MCF 10A (cell line): ENCODE measurements at regions of chr14 and their contacts with region 1.

Region 1: GRCh38 chr14:59126710-59127432 is 61.6 kb upstream of the DAAM1 start:
- DNase-seq: peak; percentile 75
- H3K4me3 Mint-ChIP-seq: no peak overlapping the region
- H3K27ac Mint-ChIP-seq: no peak overlapping the region
- H3K4me1 Mint-ChIP-seq: no peaks in the 10 kb centered on the region
- H3K27me3 Mint-ChIP-seq: peaks cover 12% of the 10 kb centered on the region
- CTCF ChIP-seq: peak; percentile 61

Region 2: DNA sequence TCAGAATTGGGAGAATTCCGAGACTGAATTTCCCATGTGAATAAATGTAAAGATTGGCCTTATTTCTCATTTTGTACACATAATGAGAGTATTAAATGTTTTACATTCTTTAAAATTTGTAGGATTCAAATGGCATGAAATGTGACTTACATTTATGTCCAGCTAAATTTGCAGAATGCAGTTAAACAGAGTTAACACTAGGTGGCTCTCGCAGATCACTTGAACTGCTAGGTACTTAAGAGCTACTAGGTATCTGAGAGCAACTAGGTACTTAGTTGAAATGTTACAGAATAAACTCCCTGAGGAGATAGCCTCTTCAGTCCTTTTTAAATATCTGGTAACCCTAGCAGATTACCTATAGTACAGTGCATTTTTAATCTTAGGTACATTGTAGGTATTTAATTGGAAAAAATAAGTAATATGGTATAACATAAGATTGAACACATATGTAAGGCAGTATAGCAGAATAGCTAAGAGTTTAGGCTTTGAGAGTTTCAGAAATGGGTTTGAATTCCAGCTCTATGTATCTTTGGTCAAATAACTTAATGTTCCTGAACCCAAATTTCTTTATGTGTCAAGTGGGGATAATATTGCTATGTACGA is 625.6 kb before region 1 on chr14:
- CTCF ChIA-PET with region 1: interaction called, 42 read pairs
- POLR2A ChIA-PET with region 1: interaction called, 3 read pairs
- intact Hi-C with region 1: loop called (anchors 1 kb)
- DNase-seq: peak; percentile 50
- H3K4me3 Mint-ChIP-seq: no peak overlapping the region
- H3K27ac Mint-ChIP-seq: no peak overlapping the region
- H3K4me1 Mint-ChIP-seq: no peaks in the 10 kb centered on the region
- H3K27me3 Mint-ChIP-seq: no peaks in the 10 kb centered on the region
- CTCF ChIP-seq: peak; percentile 58

Region 3: DNA sequence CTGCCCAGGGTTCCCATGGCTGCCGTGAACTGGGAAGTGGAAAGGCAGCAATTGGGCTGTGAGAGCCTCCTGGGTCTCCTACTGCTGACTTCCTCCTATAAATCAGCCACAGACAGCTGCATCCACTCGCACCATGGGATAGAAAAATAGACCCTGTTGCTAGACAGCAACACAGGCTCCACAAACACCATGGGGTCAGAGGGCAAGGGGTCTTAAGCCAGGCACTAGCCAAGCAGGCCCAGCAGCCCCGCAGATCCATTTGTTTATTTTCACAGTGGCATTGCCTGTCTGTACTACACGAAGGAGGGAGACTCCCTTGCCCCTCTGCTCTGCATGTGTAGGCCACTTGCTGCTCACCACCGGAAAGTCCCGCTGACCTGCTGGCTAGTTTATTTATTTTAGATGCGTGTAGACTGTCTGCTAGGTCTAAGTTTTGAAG is 349.3 kb before region 1 on chr14:
- CTCF ChIA-PET with region 1: no interaction called
- POLR2A ChIA-PET with region 1: no interaction called
- intact Hi-C with region 1: no loop called
- DNase-seq: no peak
- H3K4me3 Mint-ChIP-seq: no peak overlapping the region
- H3K27ac Mint-ChIP-seq: no peak overlapping the region
- H3K4me1 Mint-ChIP-seq: no peaks in the 10 kb centered on the region
- H3K27me3 Mint-ChIP-seq: peaks cover 83% of the 10 kb centered on the region
- CTCF ChIP-seq: no peak

Region 4: DNA sequence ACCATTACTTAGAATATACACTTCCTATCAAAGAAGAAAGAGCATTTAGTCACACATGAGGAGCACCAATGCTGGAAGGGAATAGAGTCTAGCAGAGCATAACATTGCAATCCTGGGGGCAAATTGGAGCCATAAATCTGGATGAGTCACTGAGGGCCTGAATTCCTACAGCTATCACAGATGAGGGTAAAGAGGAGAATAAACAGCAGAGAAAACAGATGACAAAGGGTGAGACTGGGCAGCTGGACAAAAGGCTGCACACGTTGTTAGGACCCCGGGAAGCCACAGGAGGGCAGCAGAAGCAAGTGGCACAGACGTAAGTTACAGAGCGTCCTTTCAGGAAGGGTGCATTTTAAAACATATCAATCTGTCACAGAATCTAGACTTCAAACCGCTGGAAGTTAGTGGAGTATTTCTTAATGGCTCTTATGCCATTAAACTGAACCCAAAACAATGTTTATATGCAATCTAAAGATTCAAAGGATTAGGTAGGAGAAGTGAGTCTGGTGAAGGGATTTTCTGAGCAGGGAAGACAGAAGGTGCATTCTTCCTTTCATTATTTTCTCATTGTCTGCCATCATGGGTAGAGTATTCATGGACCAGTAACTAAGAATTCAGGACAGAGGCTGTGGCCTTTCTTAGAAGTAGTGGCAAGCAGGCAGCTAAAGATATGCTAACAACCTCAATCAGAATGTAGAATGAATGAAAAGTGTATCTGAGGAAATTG is 98.2 kb before region 1 on chr14:
- CTCF ChIA-PET with region 1: interaction called, 24 read pairs
- POLR2A ChIA-PET with region 1: no interaction called
- intact Hi-C with region 1: loop called (anchors 1 kb)
- DNase-seq: peak; percentile 78
- H3K4me3 Mint-ChIP-seq: peak overlapping the region; percentile 35
- H3K27ac Mint-ChIP-seq: no peak overlapping the region
- H3K4me1 Mint-ChIP-seq: peaks cover 8% of the 10 kb centered on the region
- H3K27me3 Mint-ChIP-seq: peaks cover 41% of the 10 kb centered on the region
- CTCF ChIP-seq: peak; percentile 78

Region 5: DNA sequence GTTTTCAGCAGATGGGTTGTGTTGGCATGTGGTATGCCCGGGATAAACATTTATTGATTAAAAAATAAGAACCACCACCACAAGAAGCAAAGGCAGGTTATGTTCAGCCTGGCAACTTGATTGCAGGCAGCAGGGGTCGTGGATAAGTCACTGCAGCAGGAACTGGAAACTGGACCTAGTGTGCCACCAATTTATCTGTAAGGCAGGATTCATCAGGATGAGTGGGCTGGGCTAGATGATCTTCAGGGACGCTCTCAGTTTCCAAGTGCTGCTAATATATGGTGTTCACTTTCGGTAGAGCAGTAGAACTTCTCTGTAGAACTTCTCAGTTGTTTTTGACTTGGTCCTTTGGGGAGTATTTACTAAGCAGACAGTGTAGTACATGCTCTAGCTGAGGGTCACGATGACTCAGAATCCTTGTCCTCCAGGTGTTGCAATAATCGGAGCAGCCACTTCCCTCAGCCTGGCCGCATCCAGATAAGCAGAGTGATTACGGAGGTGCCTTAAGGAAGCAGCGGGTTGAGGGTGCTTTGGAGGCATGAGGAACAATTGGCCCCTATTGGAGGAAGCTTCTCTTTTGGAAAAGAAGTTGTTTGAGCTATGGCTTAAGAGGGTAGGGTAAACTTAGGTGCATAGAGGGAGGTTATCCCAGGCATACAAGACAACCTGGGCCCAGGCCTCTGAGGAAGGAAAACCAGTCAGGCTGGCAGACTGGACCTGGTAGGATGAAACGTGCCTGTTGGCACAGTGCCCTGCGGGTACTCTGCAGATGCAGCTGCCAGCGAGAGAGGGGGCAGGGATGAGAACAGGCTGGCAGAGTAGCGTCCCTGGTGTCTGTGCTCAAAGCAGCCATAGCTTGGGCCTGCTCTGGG is 234.3 kb after region 1 on chr14:
- CTCF ChIA-PET with region 1: interaction called, 3 read pairs
- POLR2A ChIA-PET with region 1: interaction called, 5 read pairs
- intact Hi-C with region 1: loop called (anchors 5 kb)
- DNase-seq: peak; percentile 92
- H3K4me3 Mint-ChIP-seq: peak overlapping the region; percentile 50
- H3K27ac Mint-ChIP-seq: peak overlapping the region; percentile 84
- H3K4me1 Mint-ChIP-seq: peaks cover 79% of the 10 kb centered on the region
- H3K27me3 Mint-ChIP-seq: no peaks in the 10 kb centered on the region
- CTCF ChIP-seq: no peak

Region 6: GRCh38 chr14:59438195-59438647 is 311.4 kb after region 1 on chr14:
- CTCF ChIA-PET with region 1: interaction called, 60 read pairs
- POLR2A ChIA-PET with region 1: interaction called, 11 read pairs
- intact Hi-C with region 1: no loop called
- DNase-seq: peak; percentile 76
- H3K4me3 Mint-ChIP-seq: no peak overlapping the region
- H3K27ac Mint-ChIP-seq: peak overlapping the region; percentile 57
- H3K4me1 Mint-ChIP-seq: peaks cover 15% of the 10 kb centered on the region
- H3K27me3 Mint-ChIP-seq: no peaks in the 10 kb centered on the region
- CTCF ChIP-seq: no peak

Region 7: DNA sequence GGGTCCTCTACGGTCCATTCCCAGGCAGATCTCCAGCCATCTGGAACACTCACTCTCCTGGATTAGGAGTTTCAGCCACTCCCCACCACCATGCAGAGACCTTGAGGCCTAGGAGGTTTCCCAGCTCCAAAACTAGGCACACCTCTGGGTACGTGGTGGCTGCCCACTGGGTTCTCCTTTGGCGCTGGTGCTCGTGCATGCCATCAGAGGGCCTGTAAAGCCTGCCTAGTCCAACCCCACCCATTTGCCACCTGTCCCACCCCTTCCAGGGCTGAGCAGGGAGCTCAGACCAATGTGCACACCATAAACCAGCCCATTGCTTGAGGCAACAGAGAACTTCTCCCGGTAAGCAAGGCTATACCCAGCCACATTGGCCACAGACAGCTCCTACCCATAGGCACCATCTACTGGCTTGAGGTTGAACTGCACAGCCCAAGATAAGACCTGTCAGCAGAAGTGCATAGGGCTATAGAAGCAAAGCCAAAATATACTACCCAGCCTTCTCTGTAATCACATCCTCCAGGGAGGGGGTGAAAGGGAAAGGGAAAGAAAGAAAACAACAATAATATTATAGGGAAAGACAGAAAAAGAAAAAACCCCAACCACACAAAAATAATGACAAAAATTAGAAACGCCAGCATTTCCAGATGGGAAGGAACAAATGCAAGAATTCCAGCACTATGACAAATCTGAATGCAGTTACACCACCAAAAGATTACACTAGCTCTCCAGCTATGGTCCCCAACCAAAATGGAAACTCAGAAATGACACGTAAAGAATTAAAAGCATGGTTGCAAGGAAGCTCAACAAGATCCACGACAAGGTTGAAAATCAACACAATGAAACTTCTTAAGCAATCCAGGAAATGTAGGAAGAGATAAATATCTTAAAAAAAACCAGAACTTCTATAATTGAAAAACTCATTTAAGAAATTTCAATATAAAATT is 561.6 kb after region 1 on chr14:
- CTCF ChIA-PET with region 1: no interaction called
- POLR2A ChIA-PET with region 1: no interaction called
- intact Hi-C with region 1: no loop called
- DNase-seq: peak; percentile 62
- H3K4me3 Mint-ChIP-seq: peak overlapping the region; percentile 60
- H3K27ac Mint-ChIP-seq: peak overlapping the region; percentile 98
- H3K4me1 Mint-ChIP-seq: peaks cover 60% of the 10 kb centered on the region
- H3K27me3 Mint-ChIP-seq: no peaks in the 10 kb centered on the region
- CTCF ChIP-seq: peak; percentile 26